ENCODE measurements at regions of chr17 and their contacts with region 1.

Region 1: GRCh38 chr17:58587702-58588254 is 73.3 kb upstream of the MTMR4 start:
- DNase-seq: peak; percentile 39 to 40
- ATAC-seq: peak in 6 of 8 donors; percentile 41 to 79 (median 62)
- H3K4me3 ChIP-seq: no peak overlapping the region
- H3K27ac ChIP-seq: no peak overlapping the region
- H3K4me1 ChIP-seq: no peaks in the 10 kb centered on the region
- H3K27me3 ChIP-seq: no peaks in the 10 kb centered on the region
- CTCF ChIP-seq: peak; percentile 85 to 96 (median 94)

Region 2: GRCh38 chr17:58531661-58532554 is 55.9 kb before region 1 on chr17:
- intact Hi-C with region 1: loop called in 3 of 10 experiments (anchors 2 to 10 kb)
- DNase-seq: peak; percentile 53 to 78
- ATAC-seq: peak; percentile 75 to 91 (median 82)
- H3K4me3 ChIP-seq: peak overlapping the region; percentile 44 to 75 (median 64)
- H3K27ac ChIP-seq: peak overlapping the region; percentile 50 to 87 (median 68)
- H3K4me1 ChIP-seq: peaks cover 7 to 73% (median 50%) of the 10 kb centered on the region in 9 donors
- H3K27me3 ChIP-seq: peaks cover 0 to 19% (median 0%) of the 10 kb centered on the region in 7 donors
- CTCF ChIP-seq: no peak

Region 3: DNA sequence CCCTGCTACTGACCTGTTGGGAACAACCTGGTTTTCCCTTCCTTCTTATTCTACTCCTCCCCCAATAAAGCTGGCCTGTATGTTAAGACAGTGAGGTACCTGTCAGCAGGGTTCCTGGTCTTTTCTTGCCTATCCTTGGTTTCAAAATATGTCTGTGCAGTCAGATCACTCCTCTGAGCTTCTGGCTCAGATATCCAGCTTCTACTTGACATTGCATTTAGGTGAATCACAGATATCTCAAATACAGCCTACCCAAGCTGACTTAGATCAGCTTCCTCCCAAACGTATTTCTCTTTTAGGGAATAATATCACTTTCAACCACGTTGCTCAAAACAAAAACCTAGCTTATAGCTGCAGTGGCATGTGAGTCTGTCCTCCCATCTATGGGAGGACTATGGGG is 55.4 kb after region 1 on chr17:
- intact Hi-C with region 1: no loop called
- DNase-seq: no peak
- ATAC-seq: no peak
- H3K4me3 ChIP-seq: no peak overlapping the region
- H3K27ac ChIP-seq: no peak overlapping the region
- H3K4me1 ChIP-seq: peaks cover 0 to 9% (median 0%) of the 10 kb centered on the region in 9 donors
- H3K27me3 ChIP-seq: no peaks in the 10 kb centered on the region
- CTCF ChIP-seq: no peak

Region 4: GRCh38 chr17:58692239-58693055 is 104.7 kb after region 1 on chr17 and contains the start of gene RAD51C:
- intact Hi-C with region 1: loop called in 6 of 10 experiments (anchors 2 to 10 kb)
- DNase-seq: peak; percentile 84 to 87
- ATAC-seq: peak; percentile 99 to 100 (median 99)
- H3K4me3 ChIP-seq: peak within 1 kb of the TSS; percentile 21 to 87 (median 72)
- H3K27ac ChIP-seq: peak within 1 kb of the TSS in 9 of 10 donors; percentile 67 to 90 (median 82)
- H3K4me1 ChIP-seq: peaks cover 0 to 25% (median 16%) of the 10 kb centered on the region in 9 donors
- H3K27me3 ChIP-seq: no peaks in the 10 kb centered on the region
- CTCF ChIP-seq: peak in 1 of 9 donors; percentile 19
- total RNA-seq, gene RAD51C: 33.2 to 40.7 (median 37.6) TPM

Region 5: DNA sequence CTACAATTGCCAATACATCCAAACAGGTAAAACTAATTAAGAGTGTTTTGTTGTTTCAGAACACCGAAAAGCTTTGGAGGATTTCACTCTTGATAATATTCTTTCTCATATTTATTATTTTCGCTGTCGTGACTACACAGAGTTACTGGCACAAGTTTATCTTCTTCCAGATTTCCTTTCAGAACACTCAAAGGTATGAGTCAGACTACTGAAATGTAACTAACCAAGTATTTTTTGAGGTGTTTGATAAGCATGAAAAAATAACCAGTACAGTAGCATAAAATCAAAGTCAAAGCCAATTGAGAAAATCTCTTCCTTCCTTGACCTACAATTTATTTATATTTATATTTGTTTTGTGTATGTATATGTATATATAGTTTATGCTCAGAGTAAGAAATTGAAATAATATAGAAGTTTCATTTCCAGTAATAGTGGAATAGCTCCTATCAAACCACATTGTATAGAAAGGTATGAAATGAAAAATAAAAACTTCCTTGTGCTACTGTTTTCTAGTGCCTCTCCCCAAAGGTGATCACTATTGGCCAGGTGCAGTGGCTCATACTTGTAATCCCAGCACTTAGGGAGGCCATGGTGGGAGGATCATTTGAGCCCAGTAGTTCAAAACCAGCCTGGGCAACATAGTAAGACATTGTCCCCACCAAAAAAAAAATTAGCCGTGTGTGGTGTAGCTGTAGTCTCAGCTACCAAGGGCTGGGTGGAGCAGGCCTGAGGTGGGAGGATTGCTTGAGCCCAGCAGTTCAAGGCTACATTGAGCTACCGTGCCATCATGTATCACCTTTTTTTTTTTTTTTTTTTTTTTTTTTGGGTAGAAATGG is 115.6 kb after region 1 on chr17:
- intact Hi-C with region 1: loop called in 5 of 10 experiments (anchors 10 kb)
- DNase-seq: no peak
- ATAC-seq: no peak
- H3K4me3 ChIP-seq: no peak overlapping the region
- H3K27ac ChIP-seq: no peak overlapping the region
- H3K4me1 ChIP-seq: no peaks in the 10 kb centered on the region
- H3K27me3 ChIP-seq: no peaks in the 10 kb centered on the region
- CTCF ChIP-seq: no peak

Measured in heart right ventricle (tissue), 16 donors.